ENCODE measurements at regions of chr4 and their contacts with region 1.

Region 1: GRCh38 chr4:80017125-80017854 is 55.7 kb downstream of the ANTXR2 start:
- DNase-seq: no peak
- H3K4me3 ChIP-seq: no peak overlapping the region
- H3K27ac ChIP-seq: peak overlapping the region in 3 of 4 donors; percentile 26 to 62 (median 52)
- H3K4me1 ChIP-seq: peaks cover 0 to 44% (median 38%) of the 10 kb centered on the region in 4 donors
- H3K27me3 ChIP-seq: no peaks in the 10 kb centered on the region
- CTCF ChIP-seq: no peak
- EP300 ChIP-seq: no peak
- POLR2A ChIP-seq: no peak

Region 2: GRCh38 chr4:79987401-79987800 is 29.9 kb before region 1 on chr4:
- intact Hi-C with region 1: loop called (anchors 5 kb)
- DNase-seq: no peak
- H3K4me3 ChIP-seq: no peak overlapping the region
- H3K27ac ChIP-seq: no peak overlapping the region
- H3K4me1 ChIP-seq: peaks cover 0 to 25% (median 20%) of the 10 kb centered on the region in 4 donors
- H3K27me3 ChIP-seq: no peaks in the 10 kb centered on the region
- CTCF ChIP-seq: no peak
- EP300 ChIP-seq: no peak
- POLR2A ChIP-seq: no peak